ENCODE measurements at regions of chr2 and their contacts with region 1.

Region 1: GRCh38 chr2:135052042-135052876 is at the start of gene RAB3GAP1:
- DNase-seq: peak; percentile 75
- H3K4me3 Mint-ChIP-seq: peak within 1 kb of the TSS; percentile 98
- H3K27ac Mint-ChIP-seq: peak within 1 kb of the TSS; percentile 99
- H3K4me1 Mint-ChIP-seq: peaks cover 62% of the 10 kb centered on the region
- H3K27me3 Mint-ChIP-seq: no peaks in the 10 kb centered on the region
- CTCF ChIP-seq: no peak
- total RNA-seq, gene RAB3GAP1: 47.6 and 50.6 TPM in 2 replicates

Region 2: GRCh38 chr2:135093670-135094330 is 41.5 kb after region 1 on chr2:
- CTCF ChIA-PET with region 1: interaction called, 7 read pairs
- intact Hi-C with region 1: loop called (anchors 5 kb)
- DNase-seq: no peak
- H3K4me3 Mint-ChIP-seq: no peak overlapping the region
- H3K27ac Mint-ChIP-seq: no peak overlapping the region
- H3K4me1 Mint-ChIP-seq: peaks cover 29% of the 10 kb centered on the region
- H3K27me3 Mint-ChIP-seq: no peaks in the 10 kb centered on the region
- CTCF ChIP-seq: no peak

Region 3: DNA sequence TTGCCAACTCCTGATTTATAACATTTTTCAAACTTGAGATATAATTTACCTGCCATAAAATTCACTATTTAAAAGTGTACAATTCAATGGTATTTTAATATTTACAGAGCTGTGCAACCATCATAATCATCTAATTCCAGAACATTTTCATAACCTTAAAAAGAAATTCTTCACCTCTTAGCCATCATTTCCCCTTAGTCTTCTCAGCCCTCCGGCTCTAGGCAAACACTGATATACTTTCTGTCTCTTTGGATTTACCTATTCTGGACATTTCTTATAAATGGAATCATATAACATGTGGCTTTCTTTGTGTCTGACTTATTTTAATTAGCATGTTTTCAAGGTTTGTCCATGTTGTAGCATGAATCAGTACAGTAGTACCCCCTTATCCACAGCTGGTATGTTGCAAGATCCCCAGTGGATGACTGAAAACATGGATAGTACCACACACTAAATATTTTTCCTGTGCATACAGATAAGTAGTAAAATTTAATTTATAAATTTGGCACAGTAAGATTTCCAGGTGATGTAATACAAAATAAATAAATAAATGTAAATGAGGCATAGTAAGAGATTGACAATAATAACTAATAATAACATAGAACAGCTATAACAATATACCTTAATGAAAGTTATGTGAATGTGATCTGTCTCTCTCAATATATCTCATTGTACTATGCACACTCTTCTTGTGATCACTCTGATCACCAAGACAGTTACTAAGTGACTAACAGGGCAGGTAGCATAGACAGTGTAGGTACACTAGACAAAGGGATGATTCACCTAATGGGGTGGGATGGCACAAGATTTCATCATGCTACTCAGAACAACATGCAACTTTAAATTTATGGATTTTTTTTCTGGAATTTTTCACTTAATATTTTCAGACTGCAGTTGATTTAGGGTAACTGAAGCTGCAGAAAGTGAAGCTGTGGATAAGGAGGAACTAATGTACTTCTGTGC is 72.9 kb after region 1 on chr2:
- CTCF ChIA-PET with region 1: interaction called, 3 read pairs
- intact Hi-C with region 1: loop called (anchors 5 kb)
- DNase-seq: no peak
- H3K4me3 Mint-ChIP-seq: no peak overlapping the region
- H3K27ac Mint-ChIP-seq: no peak overlapping the region
- H3K4me1 Mint-ChIP-seq: peaks cover 13% of the 10 kb centered on the region
- H3K27me3 Mint-ChIP-seq: no peaks in the 10 kb centered on the region
- CTCF ChIP-seq: no peak

Measured in Calu3 (cell line).